A673 (cell line): ENCODE measurements at regions of chr6 and their contacts with region 1.

Region 1: DNA sequence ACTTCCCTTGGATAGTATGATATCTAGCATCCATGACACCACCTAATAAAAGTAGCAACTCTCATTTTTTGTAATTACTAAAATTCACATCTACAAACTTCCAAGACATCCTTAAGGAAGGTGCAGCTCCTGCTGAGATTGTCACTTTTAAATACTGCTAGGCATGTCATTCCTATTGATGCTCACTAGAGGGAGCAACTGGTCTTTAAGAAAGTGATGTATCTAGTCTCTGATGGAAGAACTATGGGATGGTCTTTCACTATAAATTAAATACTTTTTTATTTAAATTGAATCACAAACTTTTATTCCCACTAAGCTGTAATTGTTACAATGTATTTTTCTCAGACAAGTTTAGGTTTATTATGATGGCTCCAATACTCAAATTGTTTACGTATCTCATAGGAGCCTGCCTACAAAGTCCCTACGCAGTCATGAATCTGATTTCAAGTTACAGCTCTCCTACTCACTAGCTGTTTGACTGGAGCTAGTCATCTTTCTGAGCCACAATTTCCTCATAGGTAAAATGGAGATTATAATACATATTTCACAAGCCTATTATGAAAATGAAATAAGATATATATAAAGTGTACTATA is 8.1 kb upstream of the TSPYL1 start:
- DNase-seq: peak; percentile 58
- H3K4me3 ChIP-seq: no peak overlapping the region
- H3K27ac ChIP-seq: no peak overlapping the region
- H3K4me1 ChIP-seq: no peaks in the 10 kb centered on the region
- H3K27me3 ChIP-seq: no peaks in the 10 kb centered on the region
- CTCF ChIP-seq: peak; percentile 90

Region 2: GRCh38 chr6:115396112-115396906 is 891.5 kb before region 1 on chr6:
- CTCF ChIA-PET with region 1: no interaction called
- POLR2A ChIA-PET with region 1: no interaction called
- intact Hi-C with region 1: no loop called
- DNase-seq: no peak
- H3K4me3 ChIP-seq: no peak overlapping the region
- H3K27ac ChIP-seq: no peak overlapping the region
- H3K4me1 ChIP-seq: no peaks in the 10 kb centered on the region
- H3K27me3 ChIP-seq: no peaks in the 10 kb centered on the region
- CTCF ChIP-seq: no peak

Region 3: GRCh38 chr6:116060572-116061283 is 227.1 kb before region 1 on chr6 and contains the start of gene FRK:
- CTCF ChIA-PET with region 1: no interaction called
- POLR2A ChIA-PET with region 1: no interaction called
- intact Hi-C with region 1: no loop called
- DNase-seq: peak; percentile 63
- H3K4me3 ChIP-seq: peak within 1 kb of the TSS; percentile 54
- H3K27ac ChIP-seq: peak within 1 kb of the TSS; percentile 74
- H3K4me1 ChIP-seq: peaks cover 10% of the 10 kb centered on the region
- H3K27me3 ChIP-seq: no peaks in the 10 kb centered on the region
- CTCF ChIP-seq: peak; percentile 59
- total RNA-seq, gene FRK: 10.0 and 12.3 TPM in 2 replicates

Region 4: GRCh38 chr6:116217069-116217468 is 70.7 kb before region 1 on chr6:
- CTCF ChIA-PET with region 1: no interaction called
- POLR2A ChIA-PET with region 1: no interaction called
- intact Hi-C with region 1: no loop called
- DNase-seq: peak; percentile 64
- H3K4me3 ChIP-seq: no peak overlapping the region
- H3K27ac ChIP-seq: peak overlapping the region; percentile 37
- H3K4me1 ChIP-seq: peaks cover 16% of the 10 kb centered on the region
- H3K27me3 ChIP-seq: no peaks in the 10 kb centered on the region
- CTCF ChIP-seq: peak; percentile 73

Region 5: DNA sequence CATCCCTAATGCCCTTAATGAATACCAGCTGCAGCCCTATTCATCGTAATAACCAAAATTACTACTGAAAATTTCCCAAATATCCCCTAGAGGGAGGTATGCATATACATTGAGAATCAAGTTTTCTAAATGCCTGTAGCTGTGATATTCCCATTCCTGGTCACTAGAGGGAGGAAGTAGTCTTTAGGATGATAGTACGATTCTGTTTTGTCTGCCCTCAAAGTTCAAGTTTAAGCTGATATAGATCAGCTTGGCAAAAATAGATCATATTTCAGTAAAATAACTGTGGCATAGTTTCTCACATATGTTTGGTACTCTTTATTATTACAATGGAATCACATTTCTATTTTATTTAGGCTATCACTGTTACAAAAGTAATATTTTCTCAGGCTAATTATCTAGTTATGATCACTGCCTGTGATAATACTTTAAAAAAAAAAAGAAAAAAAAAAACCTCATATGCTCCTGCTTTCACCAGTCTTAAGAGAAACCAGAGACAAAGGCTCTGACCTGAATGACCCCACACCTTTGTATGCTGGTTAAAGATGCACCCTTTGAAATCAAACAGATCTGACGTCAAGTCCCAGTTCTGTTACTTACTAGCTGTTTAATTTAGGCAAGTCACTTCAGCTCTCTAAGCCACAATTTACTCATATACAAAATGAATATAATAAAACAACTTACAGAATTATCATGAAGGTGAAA is 19.0 kb before region 1 on chr6:
- CTCF ChIA-PET with region 1: interaction called, 17 read pairs
- POLR2A ChIA-PET with region 1: no interaction called
- intact Hi-C with region 1: no loop called
- DNase-seq: peak; percentile 91
- H3K4me3 ChIP-seq: no peak overlapping the region
- H3K27ac ChIP-seq: no peak overlapping the region
- H3K4me1 ChIP-seq: peaks cover 11% of the 10 kb centered on the region
- H3K27me3 ChIP-seq: no peaks in the 10 kb centered on the region
- CTCF ChIP-seq: peak; percentile 92

Region 6: DNA sequence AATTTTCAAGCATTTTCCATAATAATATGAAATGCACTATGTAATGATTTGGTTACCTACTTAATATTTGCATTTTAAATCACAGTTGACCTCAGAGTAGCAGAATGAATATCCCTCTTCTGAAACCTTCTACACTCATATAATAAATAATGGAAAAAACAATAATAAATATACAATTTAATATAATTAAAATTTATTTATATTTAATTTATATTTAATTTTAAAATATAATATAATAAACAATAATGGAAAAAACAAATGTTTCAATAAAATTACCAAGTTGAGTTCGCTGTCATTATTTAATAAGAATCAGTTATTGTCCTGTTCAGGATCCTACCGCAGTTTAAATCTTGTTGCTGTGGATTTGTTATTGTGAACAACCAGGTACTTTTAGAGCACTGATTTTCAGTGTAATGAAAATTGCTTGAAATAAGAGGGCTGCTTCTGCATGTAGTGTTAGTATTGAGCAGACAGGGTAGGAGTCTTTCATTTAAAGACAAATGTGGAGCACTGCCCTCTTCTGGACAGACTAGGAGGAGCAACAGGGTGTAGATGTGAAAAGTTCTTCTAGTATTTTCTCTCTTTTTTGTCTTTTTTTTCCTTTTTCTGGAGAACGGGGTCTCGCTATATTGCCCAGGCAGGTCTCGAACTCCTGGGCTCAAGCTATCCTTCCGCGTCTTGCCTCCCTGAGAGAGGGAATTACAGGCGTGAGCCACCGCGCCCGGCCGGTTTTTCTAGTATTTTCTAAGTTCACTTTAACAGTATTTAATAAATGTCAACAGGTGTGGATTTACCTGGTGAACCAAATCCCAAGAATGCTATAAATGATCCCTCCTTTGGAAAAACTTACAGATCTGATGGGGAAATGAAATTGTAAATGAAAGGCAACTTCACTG is 244.1 kb after region 1 on chr6:
- CTCF ChIA-PET with region 1: interaction called, 10 read pairs
- POLR2A ChIA-PET with region 1: no interaction called
- intact Hi-C with region 1: loop called (anchors 1 kb)
- DNase-seq: peak; percentile 75
- H3K4me3 ChIP-seq: no peak overlapping the region
- H3K27ac ChIP-seq: no peak overlapping the region
- H3K4me1 ChIP-seq: peaks cover 3% of the 10 kb centered on the region
- H3K27me3 ChIP-seq: no peaks in the 10 kb centered on the region
- CTCF ChIP-seq: peak; percentile 81